Heart left ventricle (tissue), 16 donors: ENCODE measurements at regions of chr1 and their contacts with region 1.

Region 1: DNA sequence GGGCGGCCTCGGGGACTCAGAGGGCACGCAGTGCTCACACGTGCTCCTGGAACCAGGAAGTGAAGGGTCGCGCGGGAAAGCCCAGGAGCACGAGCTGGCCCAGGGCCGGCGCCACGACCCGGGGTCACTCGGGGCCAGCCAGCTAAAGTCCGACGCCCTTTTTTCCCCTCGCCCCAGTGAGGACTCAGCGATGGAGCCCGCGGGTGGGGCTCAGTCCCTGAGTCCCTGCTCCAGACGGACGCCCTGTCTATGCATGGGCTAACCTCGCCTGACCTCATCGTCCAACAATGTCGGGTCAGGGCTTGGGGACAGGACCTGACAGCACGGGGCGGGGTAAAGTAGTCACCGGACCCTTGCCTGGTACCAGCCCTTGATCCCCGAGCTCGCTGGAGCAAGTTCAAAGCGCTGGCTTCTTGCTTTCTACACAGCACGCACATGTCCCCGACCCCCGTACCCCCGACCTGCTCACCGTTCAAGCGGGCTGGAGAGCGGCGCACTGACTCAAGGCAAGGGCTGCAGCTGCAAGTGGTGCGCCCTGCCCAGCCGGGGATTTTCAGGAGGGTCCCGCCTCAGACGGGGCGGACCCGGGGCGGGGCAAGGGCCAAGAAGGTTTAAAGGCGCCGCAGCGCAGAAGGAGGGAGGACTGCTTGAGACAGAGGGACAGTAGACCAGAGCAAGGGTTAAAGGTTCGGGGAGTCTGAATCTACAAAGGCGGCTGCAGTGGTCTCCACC is at the start of gene TAGLN2:
- DNase-seq: peak; percentile 94 to 96 (median 95)
- ATAC-seq: peak; percentile 77 to 83 (median 80)
- H3K4me3 ChIP-seq: peak within 1 kb of the TSS; percentile 64 to 99 (median 84)
- H3K27ac ChIP-seq: peak within 1 kb of the TSS; percentile 86 to 100 (median 97)
- H3K4me1 ChIP-seq: peaks cover 0 to 51% (median 32%) of the 10 kb centered on the region in 12 donors
- H3K27me3 ChIP-seq: no peaks in the 10 kb centered on the region
- CTCF ChIP-seq: no peak
- POLR2A ChIP-seq: peak in 1 of 2 donors; percentile 96
- total RNA-seq, gene TAGLN2: 84.3 to 246 (median 131) TPM

Region 2: GRCh38 chr1:159009704-159010361 is 915.3 kb before region 1 on chr1 and contains the start of gene IFI16:
- intact Hi-C with region 1: loop called in 1 of 10 experiments (anchors 10 kb)
- DNase-seq: peak in 3 of 5 donors; percentile 56 to 73 (median 63)
- ATAC-seq: peak; percentile 76 to 93 (median 92)
- H3K4me3 ChIP-seq: peak within 1 kb of the TSS; percentile 37 to 82 (median 60)
- H3K27ac ChIP-seq: peak within 1 kb of the TSS; percentile 69 to 99 (median 86)
- H3K4me1 ChIP-seq: peaks cover 0 to 68% (median 20%) of the 10 kb centered on the region in 12 donors
- H3K27me3 ChIP-seq: no peaks in the 10 kb centered on the region
- CTCF ChIP-seq: no peak
- POLR2A ChIP-seq: peak in 1 of 2 donors; percentile 68
- total RNA-seq, gene IFI16: 19.1 to 125 (median 23.7) TPM

Region 3: GRCh38 chr1:159854693-159855192 is 70.4 kb before region 1 on chr1:
- intact Hi-C with region 1: loop called in 7 of 10 experiments (anchors 2 to 10 kb)
- DNase-seq: peak; percentile 90 to 95 (median 92)
- ATAC-seq: peak; percentile 82 to 98 (median 94)
- H3K4me3 ChIP-seq: peak overlapping the region; percentile 68 to 96 (median 78)
- H3K27ac ChIP-seq: peak overlapping the region; percentile 90 to 99 (median 98)
- H3K4me1 ChIP-seq: peaks cover 0 to 24% (median 11%) of the 10 kb centered on the region in 12 donors
- H3K27me3 ChIP-seq: no peaks in the 10 kb centered on the region
- CTCF ChIP-seq: peak in 4 of 12 donors; percentile 13 to 36 (median 30)
- POLR2A ChIP-seq: peak in 1 of 2 donors; percentile 87

Region 4: GRCh38 chr1:160045653-160046052 is 120.5 kb after region 1 on chr1:
- intact Hi-C with region 1: no loop called
- DNase-seq: no peak
- ATAC-seq: no peak
- H3K4me3 ChIP-seq: no peak overlapping the region
- H3K27ac ChIP-seq: no peak overlapping the region
- H3K4me1 ChIP-seq: peaks cover 0 to 14% (median 8%) of the 10 kb centered on the region in 12 donors
- H3K27me3 ChIP-seq: peaks cover 0 to 5% (median 0%) of the 10 kb centered on the region in 9 donors
- CTCF ChIP-seq: no peak
- POLR2A ChIP-seq: no peak